Activated T-helper 1 cell treated with anti-CD3 and anti-CD28 coated beads, Interleukin-12 subunit alpha, Interleukin-12 subunit beta, Interleukin-2, Interleukin-4 antibody, amounts not matched to agents 30 ng/mL and 10 ng/mL and 1 ng/mL, durations not matched to agents 14 hours and 24 hours and 36 hours (primary cell): ENCODE measurements at regions of chr7 and their contacts with region 1.

Region 1: GRCh38 chr7:87059525-87060287 is at the start of gene ELAPOR2:
- DNase-seq: peak; percentile 70
- H3K4me3 Mint-ChIP-seq: peak within 1 kb of the TSS; percentile 70
- H3K27ac Mint-ChIP-seq: peak within 1 kb of the TSS; percentile 20
- H3K4me1 Mint-ChIP-seq: peaks cover 8% of the 10 kb centered on the region
- H3K27me3 Mint-ChIP-seq: peaks cover 17% of the 10 kb centered on the region
- total RNA-seq, gene ELAPOR2: 1.3 and 2.3 TPM in 2 replicates

Region 2: GRCh38 chr7:86776136-86776535 is 283.6 kb before region 1 on chr7:
- intact Hi-C with region 1: no loop called
- DNase-seq: no peak
- H3K4me3 Mint-ChIP-seq: no peak overlapping the region
- H3K27ac Mint-ChIP-seq: no peak overlapping the region
- H3K4me1 Mint-ChIP-seq: no peaks in the 10 kb centered on the region
- H3K27me3 Mint-ChIP-seq: peaks cover 2% of the 10 kb centered on the region

Region 3: GRCh38 chr7:86939197-86939814 is 120.4 kb before region 1 on chr7:
- intact Hi-C with region 1: loop called (anchors 5 kb)
- DNase-seq: peak; percentile 14
- H3K4me3 Mint-ChIP-seq: no peak overlapping the region
- H3K27ac Mint-ChIP-seq: no peak overlapping the region
- H3K4me1 Mint-ChIP-seq: no peaks in the 10 kb centered on the region
- H3K27me3 Mint-ChIP-seq: peaks cover 8% of the 10 kb centered on the region

Region 4: DNA sequence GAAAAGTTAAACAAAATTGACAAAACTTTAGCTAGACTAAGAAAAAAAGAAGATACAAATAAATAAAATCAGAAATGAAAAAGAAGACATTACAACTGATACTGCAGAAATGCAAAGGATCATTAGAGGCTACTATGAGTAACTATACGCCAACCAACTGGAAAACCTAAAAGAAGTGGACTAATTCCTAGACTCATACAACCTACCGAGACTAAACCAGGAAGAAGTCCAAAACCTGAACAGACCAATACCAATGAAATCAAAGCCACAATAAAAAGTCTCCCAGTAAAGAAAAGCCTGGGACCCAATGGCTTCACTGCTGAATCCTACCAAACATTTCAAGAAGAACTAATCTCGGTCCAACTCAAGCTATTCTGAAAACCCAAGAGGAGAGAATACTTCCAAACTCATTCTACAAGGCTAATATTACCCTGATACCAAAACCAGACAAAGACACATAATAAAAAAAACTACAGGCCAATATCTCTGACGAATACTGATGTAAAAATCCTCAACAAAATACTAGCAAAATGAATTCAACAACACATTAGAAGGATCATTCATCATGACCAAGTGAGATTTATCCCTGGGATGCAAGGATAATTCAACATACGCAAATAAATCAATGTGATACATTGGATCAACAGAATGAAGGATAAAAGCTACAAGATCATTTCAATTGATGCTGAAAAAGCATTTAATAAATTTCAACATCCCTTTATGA is 20.6 kb before region 1 on chr7:
- intact Hi-C with region 1: loop called (anchors 2 kb)
- DNase-seq: no peak
- H3K4me3 Mint-ChIP-seq: peak overlapping the region; percentile 72
- H3K27ac Mint-ChIP-seq: peak overlapping the region; percentile 6
- H3K4me1 Mint-ChIP-seq: no peaks in the 10 kb centered on the region
- H3K27me3 Mint-ChIP-seq: no peaks in the 10 kb centered on the region

Region 5: GRCh38 chr7:87231256-87231655 is 171.6 kb after region 1 on chr7:
- intact Hi-C with region 1: loop called (anchors 5 kb)
- DNase-seq: no peak
- H3K4me3 Mint-ChIP-seq: no peak overlapping the region
- H3K27ac Mint-ChIP-seq: no peak overlapping the region
- H3K4me1 Mint-ChIP-seq: peaks cover 9% of the 10 kb centered on the region
- H3K27me3 Mint-ChIP-seq: peaks cover 7% of the 10 kb centered on the region

Region 6: GRCh38 chr7:87498893-87499292 is 439.2 kb after region 1 on chr7:
- intact Hi-C with region 1: no loop called
- DNase-seq: no peak
- H3K4me3 Mint-ChIP-seq: no peak overlapping the region
- H3K27ac Mint-ChIP-seq: no peak overlapping the region
- H3K4me1 Mint-ChIP-seq: no peaks in the 10 kb centered on the region
- H3K27me3 Mint-ChIP-seq: no peaks in the 10 kb centered on the region